CD8-positive, alpha-beta T cell (primary cell): ENCODE measurements at regions of chr10 and their contacts with region 1.

Region 1: GRCh38 chr10:69123747-69124562 is at the start of gene VPS26A:
- DNase-seq: peak; percentile 95 to 99 (median 98)
- ATAC-seq: peak; percentile 97
- H3K4me3 ChIP-seq: peak within 1 kb of the TSS; percentile 88 to 90
- H3K4me3 Mint-ChIP-seq: peak within 1 kb of the TSS; percentile 94
- H3K27ac ChIP-seq: peak within 1 kb of the TSS; percentile 94
- H3K27ac Mint-ChIP-seq: peak within 1 kb of the TSS; percentile 97
- H3K4me1 ChIP-seq: peaks cover 27% of the 10 kb centered on the region
- H3K4me1 Mint-ChIP-seq: peaks cover 30% of the 10 kb centered on the region
- H3K27me3 ChIP-seq: no peaks in the 10 kb centered on the region
- H3K27me3 Mint-ChIP-seq: no peaks in the 10 kb centered on the region
- CTCF ChIP-seq: peak; percentile 54
- total RNA-seq, gene VPS26A: 48.6 to 50.3 TPM

Region 2: DNA sequence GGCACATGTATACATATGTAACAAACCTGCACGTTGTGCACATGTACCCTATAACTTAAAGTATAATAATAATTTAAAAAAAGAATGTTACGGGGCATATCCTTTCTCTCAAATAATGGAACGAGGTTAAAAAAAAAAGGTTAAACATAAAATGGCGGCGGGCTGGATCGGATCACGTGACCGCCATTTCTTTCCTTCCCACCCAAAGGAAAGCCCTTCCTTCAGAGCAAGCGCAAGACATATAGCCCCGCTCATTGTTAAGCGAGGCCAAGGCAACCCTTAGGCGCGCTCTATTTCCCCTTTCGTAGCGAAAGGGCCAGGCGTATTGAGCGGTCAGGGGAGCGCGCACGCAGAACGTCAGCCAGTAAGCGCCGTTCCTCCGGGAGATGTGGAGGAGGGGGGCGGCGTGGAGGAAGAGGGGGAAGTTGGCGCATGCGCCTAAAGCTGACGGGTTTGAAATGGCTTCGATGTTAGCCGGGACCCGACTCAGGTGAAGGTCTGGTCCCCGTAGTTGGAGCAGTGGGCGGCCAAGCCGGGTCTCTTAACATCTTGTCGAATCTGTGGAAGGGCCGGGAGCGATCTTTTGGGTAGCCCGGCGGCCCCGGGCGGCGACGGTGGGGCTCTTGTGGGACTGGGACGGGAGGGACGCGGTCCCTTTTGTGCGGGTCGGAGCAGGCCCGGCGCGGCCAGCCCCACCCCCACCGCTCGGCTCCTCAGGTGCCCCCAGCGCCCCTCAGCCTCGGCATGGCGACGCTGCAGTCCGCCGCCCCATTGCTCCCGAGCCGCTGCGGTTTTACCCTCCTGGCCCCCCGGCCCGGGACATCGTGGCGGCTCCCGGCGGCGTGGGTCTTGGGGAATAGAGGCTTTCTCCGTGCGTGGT is 402.9 kb before region 1 on chr10 and contains the start of gene CCAR1:
- CTCF ChIA-PET with region 1: no interaction called
- POLR2A ChIA-PET with region 1: no interaction called
- intact Hi-C with region 1: loop called (anchors 2 to 5 kb)
- DNase-seq: peak; percentile 92 to 99 (median 97)
- ATAC-seq: peak; percentile 95
- H3K4me3 ChIP-seq: peak within 1 kb of the TSS; percentile 87 to 98
- H3K4me3 Mint-ChIP-seq: peak within 1 kb of the TSS; percentile 100
- H3K27ac ChIP-seq: peak within 1 kb of the TSS; percentile 83 to 95
- H3K27ac Mint-ChIP-seq: peak within 1 kb of the TSS; percentile 99
- H3K4me1 ChIP-seq: peaks cover 10% of the 10 kb centered on the region
- H3K4me1 Mint-ChIP-seq: peaks cover 20% of the 10 kb centered on the region
- H3K27me3 ChIP-seq: no peaks in the 10 kb centered on the region
- H3K27me3 Mint-ChIP-seq: no peaks in the 10 kb centered on the region
- CTCF ChIP-seq: no peak
- total RNA-seq, gene CCAR1: 70.8 to 79.1 TPM

Region 3: GRCh38 chr10:68988530-68989316 is 135.2 kb before region 1 on chr10 and contains the start of gene KIFBP:
- CTCF ChIA-PET with region 1: interaction called, 3 read pairs
- POLR2A ChIA-PET with region 1: interaction called, 3 read pairs
- intact Hi-C with region 1: loop called (anchors 1 kb)
- DNase-seq: peak; percentile 47 to 95 (median 79)
- ATAC-seq: peak; percentile 81
- H3K4me3 ChIP-seq: peak within 1 kb of the TSS; percentile 68 to 85
- H3K4me3 Mint-ChIP-seq: peak within 1 kb of the TSS; percentile 99
- H3K27ac ChIP-seq: peak within 1 kb of the TSS; percentile 31 to 79
- H3K27ac Mint-ChIP-seq: peak within 1 kb of the TSS; percentile 95
- H3K4me1 ChIP-seq: peaks cover 29% of the 10 kb centered on the region
- H3K4me1 Mint-ChIP-seq: peaks cover 56% of the 10 kb centered on the region
- H3K27me3 ChIP-seq: no peaks in the 10 kb centered on the region
- H3K27me3 Mint-ChIP-seq: no peaks in the 10 kb centered on the region
- CTCF ChIP-seq: peak; percentile 41
- total RNA-seq, gene KIFBP: 4.6 to 5.8 TPM

Region 4: GRCh38 chr10:69087590-69088470 is 36.1 kb before region 1 on chr10 and contains the start of gene SRGN:
- CTCF ChIA-PET with region 1: interaction called, 5 read pairs
- POLR2A ChIA-PET with region 1: interaction called, 3 read pairs
- intact Hi-C with region 1: loop called (anchors 1 kb)
- DNase-seq: peak; percentile 57 to 96 (median 76)
- ATAC-seq: peak; percentile 57
- H3K4me3 ChIP-seq: peak within 1 kb of the TSS; percentile 62 to 89
- H3K4me3 Mint-ChIP-seq: peak within 1 kb of the TSS; percentile 95
- H3K27ac ChIP-seq: peak within 1 kb of the TSS; percentile 97
- H3K27ac Mint-ChIP-seq: peak within 1 kb of the TSS; percentile 99
- H3K4me1 ChIP-seq: peaks cover 41% of the 10 kb centered on the region
- H3K4me1 Mint-ChIP-seq: peaks cover 57% of the 10 kb centered on the region
- H3K27me3 ChIP-seq: no peaks in the 10 kb centered on the region
- H3K27me3 Mint-ChIP-seq: no peaks in the 10 kb centered on the region
- CTCF ChIP-seq: no peak
- total RNA-seq, gene SRGN: 570 to 583 TPM

Region 5: GRCh38 chr10:69101451-69102095 is 22.4 kb before region 1 on chr10:
- CTCF ChIA-PET with region 1: interaction called, 4 read pairs
- POLR2A ChIA-PET with region 1: interaction called, 4 read pairs
- intact Hi-C with region 1: loop called in 1 of 2 experiments (anchors 2 kb)
- DNase-seq: peak in 6 of 9 experiments; percentile 19 to 67 (median 40)
- ATAC-seq: peak; percentile 45
- H3K4me3 ChIP-seq: no peak overlapping the region
- H3K4me3 Mint-ChIP-seq: peak overlapping the region; percentile 52
- H3K27ac ChIP-seq: peak overlapping the region in 1 of 2 experiments; percentile 60
- H3K27ac Mint-ChIP-seq: peak overlapping the region; percentile 70
- H3K4me1 ChIP-seq: peaks cover 17% of the 10 kb centered on the region
- H3K4me1 Mint-ChIP-seq: peaks cover 41% of the 10 kb centered on the region
- H3K27me3 ChIP-seq: no peaks in the 10 kb centered on the region
- H3K27me3 Mint-ChIP-seq: no peaks in the 10 kb centered on the region
- CTCF ChIP-seq: no peak

Region 6: GRCh38 chr10:69222157-69223027 is 98.4 kb after region 1 on chr10:
- CTCF ChIA-PET with region 1: no interaction called
- POLR2A ChIA-PET with region 1: no interaction called
- intact Hi-C with region 1: loop called in 1 of 2 experiments (anchors 5 kb)
- DNase-seq: peak in 8 of 9 experiments; percentile 36 to 83 (median 68)
- ATAC-seq: peak; percentile 84
- H3K4me3 ChIP-seq: peak overlapping the region in 1 of 2 experiments; percentile 39
- H3K4me3 Mint-ChIP-seq: peak overlapping the region; percentile 57
- H3K27ac ChIP-seq: peak overlapping the region in 1 of 2 experiments; percentile 60
- H3K27ac Mint-ChIP-seq: peak overlapping the region; percentile 73
- H3K4me1 ChIP-seq: peaks cover 20% of the 10 kb centered on the region
- H3K4me1 Mint-ChIP-seq: peaks cover 32% of the 10 kb centered on the region
- H3K27me3 ChIP-seq: no peaks in the 10 kb centered on the region
- H3K27me3 Mint-ChIP-seq: no peaks in the 10 kb centered on the region
- CTCF ChIP-seq: peak; percentile 87